PC-3 (cell line): ENCODE measurements at regions of chr6 and their contacts with region 1.

Region 1: GRCh38 chr6:100099189-100100074 is 105.4 kb upstream of the MCHR2 start:
- DNase-seq: peak; percentile 59
- ATAC-seq: peak; percentile 45; the same call in 1 of the 2 replicates
- H3K4me3 ChIP-seq: no peak overlapping the region
- H3K27ac ChIP-seq: no peak overlapping the region
- H3K4me1 ChIP-seq: peaks cover 18% of the 10 kb centered on the region
- H3K27me3 ChIP-seq: no peaks in the 10 kb centered on the region
- CTCF ChIP-seq: peak; percentile 73

Region 2: DNA sequence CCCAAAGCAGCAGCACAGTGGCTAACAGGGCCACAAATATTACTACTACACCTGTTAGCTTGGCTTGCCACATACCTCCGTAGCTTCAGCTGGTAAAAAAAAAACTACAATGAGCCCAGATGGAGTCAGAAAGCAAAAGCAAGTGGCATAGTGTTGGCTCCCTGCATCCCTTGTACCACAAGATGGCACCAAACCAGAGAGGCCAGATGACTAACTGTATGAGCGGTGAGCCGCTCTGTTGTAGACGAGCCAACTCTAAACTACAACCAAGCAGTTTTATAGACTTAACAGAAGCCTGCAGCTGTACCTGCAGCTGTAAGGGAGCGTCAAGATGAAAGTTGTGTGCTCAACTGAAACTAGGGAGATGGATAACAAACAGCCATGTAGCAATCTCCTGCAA is 20.9 kb before region 1 on chr6:
- CTCF ChIA-PET with region 1: interaction called, 4 read pairs
- POLR2A ChIA-PET with region 1: no interaction called
- intact Hi-C with region 1: loop called (anchors 1 kb)
- DNase-seq: peak; percentile 71
- ATAC-seq: peak; percentile 96
- H3K4me3 ChIP-seq: no peak overlapping the region
- H3K27ac ChIP-seq: no peak overlapping the region
- H3K4me1 ChIP-seq: no peaks in the 10 kb centered on the region
- H3K27me3 ChIP-seq: peaks cover 13% of the 10 kb centered on the region; the same call in 1 of the 2 replicates
- CTCF ChIP-seq: peak; percentile 79

Region 3: GRCh38 chr6:100088009-100088408 is 11.4 kb before region 1 on chr6:
- CTCF ChIA-PET with region 1: no interaction called
- POLR2A ChIA-PET with region 1: no interaction called
- intact Hi-C with region 1: loop called (anchors 1 kb)
- DNase-seq: peak; percentile 71
- ATAC-seq: peak; percentile 78
- H3K4me3 ChIP-seq: no peak overlapping the region
- H3K27ac ChIP-seq: no peak overlapping the region
- H3K4me1 ChIP-seq: no peaks in the 10 kb centered on the region
- H3K27me3 ChIP-seq: no peaks in the 10 kb centered on the region
- CTCF ChIP-seq: no peak

Region 4: DNA sequence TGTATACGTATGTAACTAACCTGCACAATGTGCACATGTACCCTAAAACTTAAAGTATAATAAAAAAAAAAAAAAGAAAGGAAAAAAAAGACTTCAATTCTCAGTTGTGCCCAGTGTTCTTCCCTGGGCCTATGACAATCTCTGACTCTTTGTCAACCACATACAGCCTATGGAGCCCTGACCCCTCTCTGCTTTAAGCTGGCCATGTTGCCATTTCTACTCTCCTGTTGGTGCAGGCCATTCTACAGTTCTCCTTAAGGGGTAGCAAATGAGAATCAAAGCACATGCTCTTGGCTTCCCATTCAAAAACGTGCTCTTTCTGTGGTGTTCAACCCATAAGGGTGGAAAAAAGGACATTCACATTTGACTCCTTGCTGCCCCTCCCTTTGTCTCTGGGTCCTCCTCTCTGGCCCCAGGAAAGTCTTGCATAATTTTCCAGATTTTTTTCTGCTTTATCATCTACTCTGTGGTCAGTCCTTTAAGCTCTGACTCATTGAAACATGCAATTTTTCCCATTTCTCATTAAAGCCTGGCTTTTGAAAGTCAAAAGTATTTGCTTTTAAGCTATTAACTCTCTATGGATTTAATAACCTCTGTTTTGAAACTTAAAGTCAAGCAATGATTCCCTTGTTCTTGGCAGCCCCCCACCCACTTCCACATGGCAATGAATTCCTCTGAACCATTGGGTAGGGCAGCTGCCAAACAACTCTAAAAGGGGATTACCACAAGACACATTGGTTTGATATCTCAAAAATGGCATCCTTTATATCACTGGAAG is 103.2 kb after region 1 on chr6:
- CTCF ChIA-PET with region 1: no interaction called
- POLR2A ChIA-PET with region 1: no interaction called
- intact Hi-C with region 1: no loop called
- DNase-seq: peak; percentile 94
- ATAC-seq: peak; percentile 91
- H3K4me3 ChIP-seq: no peak overlapping the region
- H3K27ac ChIP-seq: peak overlapping the region; percentile 100
- H3K4me1 ChIP-seq: peaks cover 13% of the 10 kb centered on the region
- H3K27me3 ChIP-seq: no peaks in the 10 kb centered on the region
- CTCF ChIP-seq: no peak